A549 (cell line): ENCODE measurements at regions of chr5 and their contacts with region 1.

Region 1: GRCh38 chr5:94849821-94850736 is 231.6 kb downstream of the SLF1 start:
- DNase-seq: peak; percentile 8 to 65
- ATAC-seq: peak; percentile 89 to 95
- H3K4me3 ChIP-seq: no peak overlapping the region
- H3K27ac ChIP-seq: no peak overlapping the region
- H3K4me1 ChIP-seq: no peaks in the 10 kb centered on the region
- CTCF ChIP-seq: peak; percentile 66
- EP300 ChIP-seq: no peak
- POLR2A ChIP-seq: no peak
- RAD21 ChIP-seq: peak; percentile 67 to 82

Region 2: DNA sequence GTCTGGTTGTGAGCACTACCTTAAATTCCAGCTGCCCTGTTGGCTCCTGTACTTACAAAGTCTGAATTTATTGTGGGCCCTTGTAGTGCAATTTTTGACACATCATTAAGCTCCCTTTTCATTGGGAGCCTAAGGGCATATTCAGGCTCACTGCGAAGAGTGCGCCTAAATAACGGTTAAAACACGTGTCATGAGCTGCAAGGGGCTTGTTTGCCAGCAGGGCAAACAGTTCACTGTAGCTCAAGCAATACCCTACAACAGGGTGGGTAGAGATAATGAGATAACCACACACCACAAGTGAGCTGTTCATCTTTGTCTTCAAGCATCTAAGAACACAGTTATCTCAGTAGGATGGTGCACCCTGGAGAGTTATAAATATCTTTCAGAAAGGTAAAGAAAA is 17.4 kb before region 1 on chr5:
- CTCF ChIA-PET with region 1: interaction called, 11 read pairs
- POLR2A ChIA-PET with region 1: no interaction called
- DNase-seq: no peak
- ATAC-seq: no peak
- H3K4me3 ChIP-seq: no peak overlapping the region
- H3K27ac ChIP-seq: no peak overlapping the region
- H3K4me1 ChIP-seq: no peaks in the 10 kb centered on the region
- CTCF ChIP-seq: no peak
- EP300 ChIP-seq: no peak
- POLR2A ChIP-seq: no peak
- RAD21 ChIP-seq: no peak

Region 3: DNA sequence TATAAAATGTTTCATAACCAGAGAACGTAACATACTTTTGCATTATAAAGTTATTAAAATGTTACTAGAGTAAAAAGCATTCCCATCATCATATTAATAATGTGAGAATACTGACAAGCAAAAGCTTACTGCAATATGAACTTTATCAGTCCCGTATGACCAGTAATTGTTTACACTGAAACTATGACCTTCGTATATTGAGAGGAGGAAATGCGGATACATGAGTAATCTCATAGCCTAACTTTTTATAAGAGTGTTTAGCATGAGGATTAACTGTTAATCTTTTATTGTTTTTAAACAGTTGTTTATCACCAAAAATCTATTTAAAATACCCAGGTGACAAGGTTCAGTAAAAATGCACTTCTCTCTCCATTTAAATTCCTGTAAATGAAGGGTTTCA is 40.8 kb after region 1 on chr5:
- CTCF ChIA-PET with region 1: no interaction called
- POLR2A ChIA-PET with region 1: no interaction called
- DNase-seq: no peak
- ATAC-seq: no peak
- H3K4me3 ChIP-seq: no peak overlapping the region
- H3K27ac ChIP-seq: no peak overlapping the region
- H3K4me1 ChIP-seq: no peaks in the 10 kb centered on the region
- CTCF ChIP-seq: no peak
- EP300 ChIP-seq: no peak
- POLR2A ChIP-seq: no peak
- RAD21 ChIP-seq: no peak